ENCODE measurements at regions of chr2 and their contacts with region 1.

Region 1: GRCh38 chr2:234135720-234136221 is 85.3 kb downstream of the SPP2 start:
- DNase-seq: peak; percentile 75
- ATAC-seq: peak; percentile 53
- H3K4me3 ChIP-seq: no peak overlapping the region
- H3K4me3 Mint-ChIP-seq: no peak overlapping the region
- H3K27ac ChIP-seq: no peak overlapping the region
- H3K27ac Mint-ChIP-seq: no peak overlapping the region
- H3K4me1 ChIP-seq: peaks cover 4 to 11% of the 10 kb centered on the region in 2 donors
- H3K4me1 Mint-ChIP-seq: peaks cover 15% of the 10 kb centered on the region
- H3K27me3 ChIP-seq: peaks cover 0 to 41% (median 17%) of the 10 kb centered on the region in 4 experiments
- H3K27me3 Mint-ChIP-seq: peaks cover 49% of the 10 kb centered on the region
- CTCF ChIP-seq: peak; percentile 86

Region 2: GRCh38 chr2:233832869-233833311 is 302.9 kb before region 1 on chr2:
- CTCF ChIA-PET with region 1: no interaction called
- POLR2A ChIA-PET with region 1: no interaction called
- intact Hi-C with region 1: no loop called
- DNase-seq: no peak
- ATAC-seq: no peak
- H3K4me3 ChIP-seq: no peak overlapping the region
- H3K4me3 Mint-ChIP-seq: no peak overlapping the region
- H3K27ac ChIP-seq: no peak overlapping the region
- H3K27ac Mint-ChIP-seq: no peak overlapping the region
- H3K4me1 ChIP-seq: peaks cover 0 to 6% of the 10 kb centered on the region in 2 donors
- H3K4me1 Mint-ChIP-seq: peaks cover 3% of the 10 kb centered on the region
- H3K27me3 ChIP-seq: no peaks in the 10 kb centered on the region
- H3K27me3 Mint-ChIP-seq: no peaks in the 10 kb centered on the region
- CTCF ChIP-seq: no peak

Region 3: GRCh38 chr2:233976690-233977294 is 159.0 kb before region 1 on chr2:
- CTCF ChIA-PET with region 1: no interaction called
- POLR2A ChIA-PET with region 1: no interaction called
- intact Hi-C with region 1: loop called (anchors 1 kb)
- DNase-seq: peak; percentile 68
- ATAC-seq: no peak
- H3K4me3 ChIP-seq: no peak overlapping the region
- H3K4me3 Mint-ChIP-seq: no peak overlapping the region
- H3K27ac ChIP-seq: no peak overlapping the region
- H3K27ac Mint-ChIP-seq: no peak overlapping the region
- H3K4me1 ChIP-seq: no peaks in the 10 kb centered on the region
- H3K4me1 Mint-ChIP-seq: no peaks in the 10 kb centered on the region
- H3K27me3 ChIP-seq: peaks cover 0 to 20% (median 8%) of the 10 kb centered on the region in 4 experiments
- H3K27me3 Mint-ChIP-seq: peaks cover 61% of the 10 kb centered on the region
- CTCF ChIP-seq: peak; percentile 67

Region 4: GRCh38 chr2:234107861-234108260 is 27.9 kb before region 1 on chr2:
- CTCF ChIA-PET with region 1: no interaction called
- POLR2A ChIA-PET with region 1: no interaction called
- intact Hi-C with region 1: no loop called
- DNase-seq: no peak
- ATAC-seq: no peak
- H3K4me3 ChIP-seq: no peak overlapping the region
- H3K4me3 Mint-ChIP-seq: no peak overlapping the region
- H3K27ac ChIP-seq: no peak overlapping the region
- H3K27ac Mint-ChIP-seq: no peak overlapping the region
- H3K4me1 ChIP-seq: no peaks in the 10 kb centered on the region
- H3K4me1 Mint-ChIP-seq: no peaks in the 10 kb centered on the region
- H3K27me3 ChIP-seq: peaks cover 0 to 9% (median 4%) of the 10 kb centered on the region in 4 experiments
- H3K27me3 Mint-ChIP-seq: peaks cover 32% of the 10 kb centered on the region
- CTCF ChIP-seq: no peak

Region 5: GRCh38 chr2:234164493-234165413 is 29.0 kb after region 1 on chr2:
- CTCF ChIA-PET with region 1: interaction called, 34 read pairs
- POLR2A ChIA-PET with region 1: no interaction called
- intact Hi-C with region 1: loop called (anchors 2 kb)
- DNase-seq: peak; percentile 94
- ATAC-seq: peak; percentile 96
- H3K4me3 ChIP-seq: peak overlapping the region in 2 of 5 experiments; percentile 11 to 40
- H3K4me3 Mint-ChIP-seq: peak overlapping the region; percentile 71
- H3K27ac ChIP-seq: peak overlapping the region; percentile 87 to 88
- H3K27ac Mint-ChIP-seq: peak overlapping the region; percentile 89
- H3K4me1 ChIP-seq: peaks cover 45 to 54% of the 10 kb centered on the region in 2 donors
- H3K4me1 Mint-ChIP-seq: peaks cover 55% of the 10 kb centered on the region
- H3K27me3 ChIP-seq: peaks cover 0 to 8% (median 2%) of the 10 kb centered on the region in 4 experiments
- H3K27me3 Mint-ChIP-seq: peaks cover 9% of the 10 kb centered on the region
- CTCF ChIP-seq: no peak

Region 6: DNA sequence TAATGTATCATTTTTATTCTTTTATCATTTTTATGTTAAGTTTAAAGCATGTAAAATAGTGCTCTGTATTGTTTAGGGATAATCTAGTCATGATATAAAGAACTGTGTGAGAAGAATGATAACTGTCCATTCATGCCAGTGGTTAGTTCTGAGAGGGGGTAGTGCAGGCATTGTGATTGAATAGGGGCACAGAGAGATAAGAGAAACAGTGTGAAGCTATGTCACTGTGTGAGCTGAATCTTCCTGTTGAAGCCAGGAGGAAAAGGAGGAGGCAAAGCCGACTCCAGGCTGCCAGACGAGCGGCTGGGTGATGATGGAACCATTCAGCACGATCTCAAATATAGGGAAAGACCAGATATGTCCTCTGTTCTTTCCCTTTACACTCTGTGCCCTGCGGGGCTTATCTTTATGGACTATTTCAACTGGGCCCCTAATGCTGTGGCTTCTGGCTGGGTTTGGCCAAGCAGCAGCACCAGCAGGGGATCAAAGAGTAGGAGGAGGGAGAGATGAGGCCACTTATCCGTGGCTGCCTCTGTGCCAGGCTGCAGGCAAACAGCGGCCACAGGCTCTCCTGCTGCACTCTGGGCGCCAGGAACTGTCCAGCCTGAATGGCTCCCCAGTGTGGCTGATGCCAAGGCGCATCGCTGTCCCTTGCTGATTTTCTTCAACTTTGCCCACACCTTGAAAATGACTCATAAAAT is 42.7 kb after region 1 on chr2:
- CTCF ChIA-PET with region 1: no interaction called
- POLR2A ChIA-PET with region 1: no interaction called
- intact Hi-C with region 1: no loop called
- DNase-seq: no peak
- ATAC-seq: no peak
- H3K4me3 ChIP-seq: no peak overlapping the region
- H3K4me3 Mint-ChIP-seq: no peak overlapping the region
- H3K27ac ChIP-seq: no peak overlapping the region
- H3K27ac Mint-ChIP-seq: no peak overlapping the region
- H3K4me1 ChIP-seq: no peaks in the 10 kb centered on the region
- H3K4me1 Mint-ChIP-seq: no peaks in the 10 kb centered on the region
- H3K27me3 ChIP-seq: peaks cover 0 to 5% (median 3%) of the 10 kb centered on the region in 4 experiments
- H3K27me3 Mint-ChIP-seq: peaks cover 34% of the 10 kb centered on the region
- CTCF ChIP-seq: no peak

Region 7: GRCh38 chr2:234483568-234484251 is 347.9 kb after region 1 on chr2:
- CTCF ChIA-PET with region 1: interaction called, 11 read pairs
- POLR2A ChIA-PET with region 1: no interaction called
- intact Hi-C with region 1: no loop called
- DNase-seq: peak; percentile 90
- ATAC-seq: peak; percentile 87
- H3K4me3 ChIP-seq: peak overlapping the region in 1 of 5 experiments; percentile 27
- H3K4me3 Mint-ChIP-seq: peak overlapping the region; percentile 61
- H3K27ac ChIP-seq: peak overlapping the region; percentile 48 to 59
- H3K27ac Mint-ChIP-seq: peak overlapping the region; percentile 33
- H3K4me1 ChIP-seq: peaks cover 45 to 50% of the 10 kb centered on the region in 2 donors
- H3K4me1 Mint-ChIP-seq: peaks cover 41% of the 10 kb centered on the region
- H3K27me3 ChIP-seq: peaks cover 0 to 4% (median 0%) of the 10 kb centered on the region in 4 experiments
- H3K27me3 Mint-ChIP-seq: no peaks in the 10 kb centered on the region
- CTCF ChIP-seq: peak; percentile 71

Measured in B cell (primary cell).